ENCODE measurements at regions of chr3 and their contacts with region 1.

Region 1: DNA sequence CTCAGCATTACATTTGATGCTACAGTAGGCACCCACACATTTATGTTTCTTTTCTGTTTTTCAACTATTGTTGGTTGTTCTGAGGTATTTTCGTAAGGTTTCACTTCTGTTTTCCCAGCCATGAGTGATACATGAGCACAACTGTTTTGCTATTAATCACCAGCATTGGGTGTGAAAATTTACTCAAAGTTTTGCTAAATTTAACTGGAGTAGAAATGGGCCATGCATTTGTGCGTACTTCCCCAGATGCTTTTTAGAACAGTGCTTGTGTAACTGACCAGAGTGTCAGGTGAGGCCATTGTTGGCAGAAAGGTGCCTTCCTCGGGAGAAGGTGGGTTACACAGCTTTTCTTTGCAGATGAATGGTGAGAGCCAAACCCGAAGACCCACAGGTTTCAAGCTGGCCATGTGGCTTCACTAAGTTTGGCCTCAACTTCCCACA is 70.4 kb downstream of the ST6GAL1 start:
- DNase-seq: peak; percentile 43
- ATAC-seq: peak; percentile 66
- H3K4me3 Mint-ChIP-seq: peak overlapping the region; percentile 72
- H3K27ac Mint-ChIP-seq: peak overlapping the region; percentile 89
- H3K4me1 Mint-ChIP-seq: peaks cover 94% of the 10 kb centered on the region
- H3K27me3 Mint-ChIP-seq: no peaks in the 10 kb centered on the region
- CTCF ChIP-seq: no peak

Region 2: GRCh38 chr3:186971578-186971977 is 29.2 kb before region 1 on chr3:
- CTCF ChIA-PET with region 1: no interaction called
- POLR2A ChIA-PET with region 1: no interaction called
- intact Hi-C with region 1: no loop called
- DNase-seq: no peak
- ATAC-seq: no peak
- H3K4me3 Mint-ChIP-seq: no peak overlapping the region
- H3K27ac Mint-ChIP-seq: peak overlapping the region; percentile 41
- H3K4me1 Mint-ChIP-seq: peaks cover 54% of the 10 kb centered on the region
- H3K27me3 Mint-ChIP-seq: no peaks in the 10 kb centered on the region
- CTCF ChIP-seq: no peak

Region 3: DNA sequence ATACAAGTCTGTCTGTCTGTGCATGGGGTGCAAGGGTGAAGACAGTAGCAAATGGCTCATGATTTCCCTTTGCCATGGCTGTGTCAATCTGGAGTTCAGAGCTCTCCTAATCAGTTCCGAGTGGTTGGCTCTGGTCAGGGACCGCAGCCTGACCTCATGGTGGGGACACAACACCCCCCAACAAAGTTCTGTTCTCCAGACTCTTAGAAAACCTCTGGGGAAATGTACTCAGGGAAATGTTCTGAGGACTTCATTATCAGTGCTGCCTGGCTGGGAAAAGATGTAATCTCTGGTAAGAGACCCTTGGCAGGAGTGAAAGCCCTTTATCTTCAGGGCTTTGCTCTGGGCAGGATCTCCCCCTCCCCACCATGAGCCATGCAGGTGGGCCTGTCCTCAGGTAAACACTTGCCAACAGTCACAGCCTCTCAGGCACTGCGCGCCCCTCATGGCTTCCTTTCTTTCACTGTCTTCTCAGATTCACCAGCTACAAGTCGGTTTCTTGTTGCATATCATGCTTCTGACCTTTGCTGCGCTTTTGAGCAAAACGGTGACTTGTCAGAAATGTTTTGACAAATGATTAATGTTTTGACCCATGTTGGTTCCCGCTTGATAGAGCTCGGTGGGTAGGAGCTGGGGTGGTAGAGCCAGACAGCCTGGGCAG is 25.1 kb after region 1 on chr3:
- CTCF ChIA-PET with region 1: interaction called, 4 read pairs
- POLR2A ChIA-PET with region 1: interaction called, 44 read pairs
- intact Hi-C with region 1: loop called (anchors 1 kb)
- DNase-seq: no peak
- ATAC-seq: peak; percentile 51
- H3K4me3 Mint-ChIP-seq: peak overlapping the region; percentile 84
- H3K27ac Mint-ChIP-seq: peak overlapping the region; percentile 93
- H3K4me1 Mint-ChIP-seq: peaks cover 93% of the 10 kb centered on the region
- H3K27me3 Mint-ChIP-seq: no peaks in the 10 kb centered on the region
- CTCF ChIP-seq: no peak

Region 4: GRCh38 chr3:187031934-187032333 is 31.2 kb after region 1 on chr3:
- CTCF ChIA-PET with region 1: interaction called, 3 read pairs
- POLR2A ChIA-PET with region 1: interaction called, 28 read pairs
- intact Hi-C with region 1: no loop called
- DNase-seq: no peak
- ATAC-seq: no peak
- H3K4me3 Mint-ChIP-seq: peak overlapping the region; percentile 69
- H3K27ac Mint-ChIP-seq: peak overlapping the region; percentile 86
- H3K4me1 Mint-ChIP-seq: peaks cover 90% of the 10 kb centered on the region
- H3K27me3 Mint-ChIP-seq: no peaks in the 10 kb centered on the region
- CTCF ChIP-seq: no peak

Region 5: DNA sequence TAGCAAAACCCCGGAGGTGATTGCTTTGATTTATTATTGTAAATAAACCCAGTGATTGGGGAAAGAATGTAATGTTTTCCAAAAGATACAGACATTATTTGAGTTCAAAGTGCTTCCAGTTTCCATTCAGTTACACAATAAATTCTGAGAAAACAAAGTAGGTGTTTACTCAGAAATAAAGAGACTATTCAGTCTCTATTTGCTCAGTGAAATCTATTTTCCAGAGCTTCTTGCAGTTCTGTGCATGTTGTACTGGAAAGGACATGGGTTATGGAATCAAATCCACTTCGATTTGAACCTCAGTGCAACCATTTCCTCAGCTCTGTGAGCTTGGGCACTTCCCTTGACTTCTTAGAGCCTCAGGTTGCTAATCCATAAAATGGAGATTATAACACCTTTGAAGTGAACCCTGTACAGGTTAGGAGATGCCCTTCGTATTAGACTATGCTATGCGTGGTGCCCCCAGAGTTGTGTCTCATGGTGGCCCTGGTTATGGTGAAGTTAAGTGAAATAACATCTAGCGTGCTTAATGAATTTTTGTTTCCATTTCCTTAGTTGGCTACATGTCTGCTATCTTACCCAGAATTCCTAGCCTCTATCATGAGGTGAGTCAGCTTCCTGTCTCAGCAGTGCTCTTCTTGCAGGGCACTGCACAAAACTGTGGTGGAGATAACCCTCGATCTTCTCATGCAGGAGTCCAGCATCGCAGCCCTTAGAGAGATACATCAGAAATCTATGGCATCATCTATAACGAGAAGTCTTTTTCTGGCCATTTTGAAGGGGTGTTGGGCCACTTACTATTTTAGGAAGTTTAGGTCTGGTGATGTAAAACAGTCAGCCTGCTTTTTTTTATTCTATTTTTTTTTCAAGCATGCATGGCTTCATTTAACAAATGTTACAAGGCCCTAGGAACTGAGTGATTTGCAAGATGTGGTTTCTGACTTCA is 40.9 kb after region 1 on chr3:
- CTCF ChIA-PET with region 1: no interaction called
- POLR2A ChIA-PET with region 1: interaction called, 10 read pairs
- intact Hi-C with region 1: loop called (anchors 1 kb)
- DNase-seq: no peak
- ATAC-seq: peak; percentile 81
- H3K4me3 Mint-ChIP-seq: peak overlapping the region; percentile 74
- H3K27ac Mint-ChIP-seq: peak overlapping the region; percentile 97
- H3K4me1 Mint-ChIP-seq: peaks cover 83% of the 10 kb centered on the region
- H3K27me3 Mint-ChIP-seq: no peaks in the 10 kb centered on the region
- CTCF ChIP-seq: no peak

Measured in activated B cell treated with CpG ODN at 0.5 μM for 24 hours (primary cell).